Sigmoid colon (tissue), 7 donors: ENCODE measurements at regions of chr2 and their contacts with region 1.

Region 1: GRCh38 chr2:151269798-151270568 is 8.3 kb upstream of the RBM43 start:
- DNase-seq: no peak
- H3K4me3 ChIP-seq: no peak overlapping the region
- H3K27ac ChIP-seq: peak overlapping the region in 2 of 4 donors; percentile 0 to 21
- H3K4me1 ChIP-seq: peaks cover 0 to 10% (median 4%) of the 10 kb centered on the region in 4 donors
- H3K27me3 ChIP-seq: no peaks in the 10 kb centered on the region
- CTCF ChIP-seq: no peak
- EP300 ChIP-seq: no peak
- POLR2A ChIP-seq: no peak

Region 2: DNA sequence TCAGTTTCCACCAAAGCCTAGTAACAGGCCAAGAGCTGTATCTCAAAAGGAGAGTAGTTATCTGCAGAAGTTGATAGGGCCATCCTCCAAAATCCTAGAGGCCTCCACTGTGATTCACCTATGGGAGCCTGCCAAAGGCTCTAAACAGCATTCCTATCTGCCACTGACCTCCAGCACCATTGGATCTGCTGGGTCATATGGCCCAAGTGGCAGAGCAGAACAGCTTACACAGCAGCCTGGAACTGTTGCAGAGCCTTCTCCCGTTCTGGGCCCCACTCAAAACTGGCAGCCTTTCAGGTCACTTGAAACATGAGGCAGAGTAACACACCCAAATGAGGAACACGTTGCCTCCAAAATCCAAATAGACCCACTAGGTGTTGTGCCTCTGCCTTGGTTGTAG is 437.3 kb before region 1 on chr2:
- intact Hi-C with region 1: no loop called
- DNase-seq: no peak
- H3K4me3 ChIP-seq: no peak overlapping the region
- H3K27ac ChIP-seq: no peak overlapping the region
- H3K4me1 ChIP-seq: no peaks in the 10 kb centered on the region
- H3K27me3 ChIP-seq: no peaks in the 10 kb centered on the region
- CTCF ChIP-seq: no peak
- EP300 ChIP-seq: no peak
- POLR2A ChIP-seq: no peak

Region 3: DNA sequence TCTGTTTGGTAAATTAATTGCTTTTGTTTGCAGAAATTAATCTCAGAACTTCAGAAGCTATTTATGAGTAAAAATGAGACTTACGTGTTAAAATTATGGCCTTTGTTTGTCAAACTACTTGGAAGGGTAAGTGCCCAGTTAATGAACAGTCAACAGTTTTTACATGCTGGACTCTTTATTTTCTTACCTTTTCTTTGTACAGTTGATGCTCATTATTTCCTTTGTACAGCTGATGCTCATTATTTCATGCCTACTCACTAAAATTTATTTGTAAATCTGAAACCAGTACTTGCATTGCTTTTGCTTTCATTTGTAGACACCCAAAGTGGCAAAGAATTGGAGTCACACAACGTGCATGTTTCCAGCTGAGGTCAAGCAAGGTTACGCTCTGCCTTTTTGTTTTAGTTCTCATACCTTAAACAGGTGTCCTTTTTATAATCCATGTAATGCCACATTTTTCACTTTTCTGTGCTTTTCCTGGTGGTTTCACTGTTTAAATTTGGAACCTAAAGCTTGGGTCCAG is 153.0 kb after region 1 on chr2:
- intact Hi-C with region 1: loop called (anchors 5 kb)
- DNase-seq: no peak
- H3K4me3 ChIP-seq: no peak overlapping the region
- H3K27ac ChIP-seq: no peak overlapping the region
- H3K4me1 ChIP-seq: no peaks in the 10 kb centered on the region
- H3K27me3 ChIP-seq: no peaks in the 10 kb centered on the region
- CTCF ChIP-seq: no peak
- EP300 ChIP-seq: no peak
- POLR2A ChIP-seq: no peak